A673 (cell line): ENCODE measurements at regions of chr19 and their contacts with region 1.

Region 1: DNA sequence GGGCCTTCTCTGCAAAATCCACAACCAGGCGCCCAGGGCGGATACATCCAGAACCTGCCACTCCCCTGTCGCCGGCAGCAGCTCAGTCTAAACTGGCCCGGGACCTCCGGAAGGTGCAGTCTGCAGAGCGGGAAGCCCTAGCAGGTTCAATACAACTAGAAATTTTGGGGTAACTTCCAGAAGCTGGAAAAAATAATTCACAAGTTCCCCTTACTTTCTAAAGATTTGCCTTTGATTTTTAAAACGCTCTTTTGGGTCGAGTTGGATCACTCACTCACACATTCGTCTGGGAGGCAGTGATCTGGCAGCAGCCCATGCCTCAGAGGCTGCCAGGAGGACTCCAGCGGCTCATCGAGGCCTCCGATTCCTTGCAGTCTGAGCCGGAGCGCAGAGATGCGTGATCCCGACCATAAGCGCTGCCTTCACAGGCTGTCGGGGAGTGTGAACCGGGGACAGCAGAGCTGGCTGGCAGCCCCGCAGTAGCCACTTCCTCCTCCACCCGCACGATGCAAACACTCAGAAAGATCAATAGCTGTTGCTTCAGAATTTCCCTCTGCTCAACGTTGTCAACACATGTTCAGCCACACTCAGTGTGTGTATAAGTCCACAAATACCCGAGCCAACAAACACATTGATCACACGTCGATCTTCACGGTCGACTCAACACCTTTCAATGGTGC is 35.6 kb upstream of the ZNF507 start:
- DNase-seq: no peak
- H3K4me3 ChIP-seq: no peak overlapping the region
- H3K27ac ChIP-seq: no peak overlapping the region
- H3K4me1 ChIP-seq: peaks cover 15% of the 10 kb centered on the region
- H3K27me3 ChIP-seq: no peaks in the 10 kb centered on the region
- CTCF ChIP-seq: no peak

Region 2: DNA sequence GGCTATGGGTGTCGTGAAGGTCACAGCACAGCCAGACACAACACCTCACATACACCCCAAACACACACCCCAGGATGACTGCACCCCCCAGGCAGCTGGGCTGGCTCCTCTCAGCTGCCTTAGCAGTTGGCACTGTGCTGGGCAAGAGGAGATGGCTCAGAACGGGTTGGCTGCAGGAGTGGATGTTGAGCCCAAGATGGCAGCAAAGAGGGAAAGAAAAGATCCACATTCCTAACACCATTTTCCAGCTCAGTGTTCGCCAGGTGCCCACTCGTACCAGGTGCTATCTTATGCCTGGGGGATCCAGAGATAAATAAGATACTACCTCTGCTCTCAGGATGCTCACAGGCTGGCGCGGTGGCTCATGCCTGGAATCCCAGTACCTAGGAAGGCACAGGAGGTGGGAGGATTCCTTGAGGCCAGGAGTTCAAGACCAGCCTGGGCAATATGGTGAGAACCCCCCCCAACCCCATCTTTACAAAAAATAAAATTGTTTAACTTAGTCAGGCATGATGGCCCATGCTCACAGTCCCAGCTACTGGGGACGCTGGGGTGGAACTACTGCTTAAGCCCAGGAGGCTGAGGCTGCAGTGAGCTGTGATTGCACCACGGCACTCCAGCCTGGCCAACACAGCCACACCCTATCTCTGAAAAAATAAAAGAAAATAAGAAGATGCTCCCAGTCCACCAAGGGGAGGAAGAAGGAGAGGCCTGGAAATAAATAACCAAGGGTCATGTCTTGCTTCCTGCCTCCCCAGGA is 54.1 kb before region 1 on chr19:
- CTCF ChIA-PET with region 1: no interaction called
- POLR2A ChIA-PET with region 1: no interaction called
- intact Hi-C with region 1: no loop called
- DNase-seq: no peak
- H3K4me3 ChIP-seq: no peak overlapping the region
- H3K27ac ChIP-seq: no peak overlapping the region
- H3K4me1 ChIP-seq: no peaks in the 10 kb centered on the region
- H3K27me3 ChIP-seq: no peaks in the 10 kb centered on the region
- CTCF ChIP-seq: no peak

Region 3: DNA sequence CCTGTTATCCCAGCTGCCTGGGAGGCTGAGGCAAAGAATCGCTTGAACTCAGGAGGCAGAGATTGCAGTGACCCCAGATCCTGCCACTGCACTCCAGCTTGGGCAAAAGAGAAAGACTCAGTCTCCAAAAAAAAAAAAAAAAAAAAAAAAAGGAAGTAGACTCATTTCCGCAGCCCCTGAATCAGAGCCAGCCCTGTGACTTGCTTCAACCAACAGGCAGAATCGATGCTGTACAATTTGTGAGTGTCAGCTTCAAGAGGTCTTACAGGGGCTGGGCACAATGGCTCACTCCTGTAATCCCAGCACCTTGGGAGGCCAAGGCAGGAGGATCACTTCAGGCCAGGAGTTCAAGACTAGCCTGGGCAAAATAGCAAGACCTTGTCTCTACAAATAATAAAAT is 352.3 kb after region 1 on chr19:
- CTCF ChIA-PET with region 1: interaction called, 10 read pairs
- POLR2A ChIA-PET with region 1: no interaction called
- intact Hi-C with region 1: no loop called
- DNase-seq: no peak
- H3K4me3 ChIP-seq: no peak overlapping the region
- H3K27ac ChIP-seq: no peak overlapping the region
- H3K4me1 ChIP-seq: no peaks in the 10 kb centered on the region
- H3K27me3 ChIP-seq: no peaks in the 10 kb centered on the region
- CTCF ChIP-seq: no peak